ENCODE measurements at regions of chr17 and their contacts with region 1.

Region 1: DNA sequence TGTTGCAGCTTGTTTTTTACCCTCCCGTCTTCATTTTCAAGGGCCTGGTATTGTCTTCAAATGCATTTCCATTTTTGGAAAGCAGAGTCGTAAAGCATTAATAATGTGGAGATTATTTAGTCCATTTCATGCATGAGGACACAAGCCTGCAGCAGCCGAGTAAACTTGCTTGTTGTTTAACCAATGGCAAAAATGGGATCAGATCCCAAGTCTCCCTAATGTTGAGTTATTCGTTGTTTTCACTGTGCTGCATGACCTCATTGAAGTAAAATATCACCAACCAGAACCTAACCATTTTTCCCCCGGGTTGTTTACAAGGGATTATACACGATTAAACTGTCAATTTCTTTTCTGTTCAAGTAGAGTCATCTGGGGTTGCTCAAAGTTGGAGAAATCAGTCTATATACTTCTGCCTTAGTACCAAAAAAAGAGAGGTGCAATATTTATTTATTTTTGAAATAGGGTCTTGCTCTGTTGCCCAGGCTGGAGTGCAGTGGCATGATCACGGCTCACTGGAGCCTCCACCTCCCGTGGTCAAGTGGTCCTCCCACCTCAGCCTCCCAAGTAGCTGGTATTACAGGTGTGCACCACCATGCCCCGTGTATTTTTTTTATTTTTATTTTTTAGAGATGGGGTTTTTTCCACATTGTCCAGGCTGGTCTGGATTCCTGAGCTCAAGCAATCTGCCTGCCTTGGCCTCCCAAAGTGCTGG is 12.4 kb downstream of the AMZ2 start:
- DNase-seq: no peak
- ATAC-seq: no peak

Region 2: DNA sequence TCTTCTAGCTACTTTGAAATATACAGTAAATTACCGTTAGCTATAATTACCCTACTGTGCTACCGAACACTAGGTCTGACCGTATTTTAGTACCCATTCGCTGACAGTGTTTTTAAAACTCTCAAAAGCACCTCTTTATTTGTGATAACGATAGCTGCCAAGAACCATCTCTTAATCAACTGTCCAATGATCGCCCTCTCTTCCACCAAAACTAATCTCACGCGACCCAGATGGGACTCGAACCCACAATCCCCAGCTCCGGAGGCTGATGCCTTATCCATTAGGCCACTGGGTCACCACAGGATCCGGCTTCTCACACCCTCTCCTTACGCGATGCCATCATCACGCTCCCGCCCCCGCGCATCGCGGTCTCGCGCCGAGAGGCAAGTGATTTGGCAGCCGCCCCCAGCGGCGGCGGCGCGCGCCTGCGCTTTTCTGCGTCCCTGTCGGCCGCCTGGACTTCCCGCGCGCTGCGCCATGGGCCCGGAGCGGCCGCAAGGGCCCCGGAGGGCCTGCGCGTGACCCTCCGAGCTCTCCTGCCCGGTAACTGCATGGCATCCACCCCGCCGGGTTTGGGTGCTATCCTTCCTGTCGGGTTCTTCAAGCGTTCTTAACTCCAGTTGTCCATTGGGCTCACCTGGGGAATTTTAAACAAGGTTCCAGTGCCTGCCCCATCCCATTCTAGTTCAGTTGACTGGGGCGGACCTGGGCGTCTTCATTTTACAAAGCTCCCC is 240.4 kb before region 1 on chr17:
- intact Hi-C with region 1: no loop called
- DNase-seq: peak; percentile 97
- ATAC-seq: peak; percentile 98

Region 3: GRCh38 chr17:68398691-68399637 is 138.8 kb after region 1 on chr17:
- intact Hi-C with region 1: loop called (anchors 5 kb)
- DNase-seq: peak; percentile 70
- ATAC-seq: peak; percentile 89

Region 4: GRCh38 chr17:68435876-68436842 is 176.0 kb after region 1 on chr17:
- intact Hi-C with region 1: loop called (anchors 10 kb)
- DNase-seq: peak; percentile 76
- ATAC-seq: peak; percentile 74

Region 5: GRCh38 chr17:68457539-68458259 is 197.5 kb after region 1 on chr17:
- intact Hi-C with region 1: loop called (anchors 5 kb)
- DNase-seq: peak; percentile 100
- ATAC-seq: peak; percentile 87